GM10248 (cell line): ENCODE measurements at regions of chr20 and their contacts with region 1.

Region 1: GRCh38 chr20:64038565-64039292 is 2.7 kb downstream of the C20orf204 start:
- DNase-seq: peak; percentile 87
- CTCF ChIP-seq: peak; percentile 82

Region 2: DNA sequence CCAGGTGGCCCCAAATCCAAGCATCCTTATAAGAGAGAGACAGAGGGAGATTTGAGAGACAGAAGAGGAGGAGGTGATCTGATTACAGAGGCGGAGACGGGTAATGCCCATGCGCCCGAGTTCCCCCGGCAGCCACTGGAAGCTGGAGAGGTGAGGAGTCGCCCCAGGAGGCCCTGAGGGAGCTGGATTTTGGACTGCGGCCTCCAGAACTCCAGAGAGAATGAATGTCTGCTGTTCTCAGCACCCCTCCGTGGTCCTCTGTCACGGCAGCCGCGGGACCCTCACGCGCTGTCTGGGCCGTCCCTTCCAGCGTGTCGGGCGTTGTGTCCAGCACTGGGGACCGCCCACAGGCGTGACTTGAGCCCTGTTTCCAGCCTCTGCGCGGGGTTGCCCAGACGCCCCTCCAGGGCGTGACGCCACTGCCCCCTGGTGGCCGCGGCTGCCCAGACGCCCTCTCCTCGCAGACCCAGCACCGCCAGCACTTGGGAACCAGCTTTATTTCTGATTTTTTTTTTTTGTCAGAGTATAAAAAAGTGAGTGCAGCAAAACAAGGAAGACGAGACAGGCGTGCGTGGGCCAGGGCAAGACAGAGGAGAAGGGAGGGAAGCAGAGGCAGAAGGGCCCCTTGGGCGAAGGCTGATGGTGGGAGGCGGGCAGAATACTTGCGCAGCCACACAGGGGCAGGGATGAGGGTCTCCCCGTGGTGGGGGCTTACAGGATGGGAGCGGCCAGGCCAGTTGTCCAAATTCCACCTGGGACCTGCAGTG is 64.9 kb before region 1 on chr20:
- CTCF ChIA-PET with region 1: interaction called, 33 read pairs
- POLR2A ChIA-PET with region 1: no interaction called
- DNase-seq: peak; percentile 86
- CTCF ChIP-seq: peak; percentile 98

Region 3: GRCh38 chr20:64001607-64002011 is 37.1 kb before region 1 on chr20:
- CTCF ChIA-PET with region 1: interaction called, 21 read pairs
- POLR2A ChIA-PET with region 1: no interaction called
- DNase-seq: no peak
- CTCF ChIP-seq: no peak

Region 4: GRCh38 chr20:64027981-64028685 is 10.6 kb before region 1 on chr20:
- CTCF ChIA-PET with region 1: interaction called, 31 read pairs
- POLR2A ChIA-PET with region 1: interaction called, 8 read pairs
- DNase-seq: no peak
- CTCF ChIP-seq: no peak

Region 5: DNA sequence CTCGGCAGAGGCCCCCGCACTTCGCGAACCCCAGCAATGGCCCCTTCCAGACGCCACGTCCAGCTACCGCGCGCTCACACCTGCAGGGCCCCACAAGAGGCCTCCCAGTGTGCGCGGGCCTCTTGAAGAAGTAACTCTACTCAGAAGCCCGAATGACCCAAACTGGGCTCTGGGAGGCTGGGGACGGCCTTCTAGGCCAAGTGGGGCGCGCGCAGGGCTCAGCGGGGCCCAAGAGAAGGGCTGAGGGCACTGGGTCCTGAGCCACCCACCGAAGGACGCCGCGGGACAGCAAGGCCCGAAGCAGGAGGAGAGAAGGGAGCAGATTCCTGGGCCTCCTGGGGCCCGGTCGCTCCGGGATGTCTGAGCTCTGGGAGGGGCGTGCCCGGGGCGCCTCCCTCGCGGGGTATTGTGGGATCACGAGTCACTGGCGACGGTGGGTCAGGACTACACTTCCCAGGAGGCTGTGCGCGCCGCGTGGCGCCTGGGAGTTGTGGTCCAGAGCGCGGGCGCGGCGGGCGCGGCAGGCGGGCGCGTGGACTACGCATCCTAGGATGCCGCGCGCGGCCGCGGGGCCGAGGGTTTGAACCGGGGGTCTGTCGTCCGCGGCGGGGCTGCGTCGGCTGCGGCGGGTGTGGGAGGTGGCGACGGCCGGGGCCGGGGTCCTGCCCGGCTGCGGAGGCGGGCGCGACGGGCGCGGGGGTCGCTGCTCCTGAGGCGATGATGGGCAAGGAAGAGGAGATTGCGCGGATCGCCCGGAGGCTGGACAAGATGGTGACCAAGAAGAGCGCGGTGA is 24.1 kb after region 1 on chr20 and contains the start of gene TCEA2:
- CTCF ChIA-PET with region 1: interaction called, 60 read pairs
- POLR2A ChIA-PET with region 1: no interaction called
- DNase-seq: peak; percentile 98
- CTCF ChIP-seq: no peak